Sigmoid colon (tissue), 7 donors: ENCODE measurements at regions of chr7 and their contacts with region 1.

Region 1: GRCh38 chr7:107168233-107169119 is at the start of gene HBP1:
- DNase-seq: peak; percentile 100
- H3K4me3 ChIP-seq: peak within 1 kb of the TSS; percentile 89 to 99 (median 95)
- H3K27ac ChIP-seq: peak within 1 kb of the TSS; percentile 94 to 100 (median 96)
- H3K4me1 ChIP-seq: peaks cover 0 to 40% (median 28%) of the 10 kb centered on the region in 4 donors
- H3K27me3 ChIP-seq: no peaks in the 10 kb centered on the region
- CTCF ChIP-seq: no peak
- EP300 ChIP-seq: no peak
- POLR2A ChIP-seq: peak; percentile 49 to 64
- total RNA-seq, gene HBP1: 104 to 172 (median 119) TPM

Region 2: DNA sequence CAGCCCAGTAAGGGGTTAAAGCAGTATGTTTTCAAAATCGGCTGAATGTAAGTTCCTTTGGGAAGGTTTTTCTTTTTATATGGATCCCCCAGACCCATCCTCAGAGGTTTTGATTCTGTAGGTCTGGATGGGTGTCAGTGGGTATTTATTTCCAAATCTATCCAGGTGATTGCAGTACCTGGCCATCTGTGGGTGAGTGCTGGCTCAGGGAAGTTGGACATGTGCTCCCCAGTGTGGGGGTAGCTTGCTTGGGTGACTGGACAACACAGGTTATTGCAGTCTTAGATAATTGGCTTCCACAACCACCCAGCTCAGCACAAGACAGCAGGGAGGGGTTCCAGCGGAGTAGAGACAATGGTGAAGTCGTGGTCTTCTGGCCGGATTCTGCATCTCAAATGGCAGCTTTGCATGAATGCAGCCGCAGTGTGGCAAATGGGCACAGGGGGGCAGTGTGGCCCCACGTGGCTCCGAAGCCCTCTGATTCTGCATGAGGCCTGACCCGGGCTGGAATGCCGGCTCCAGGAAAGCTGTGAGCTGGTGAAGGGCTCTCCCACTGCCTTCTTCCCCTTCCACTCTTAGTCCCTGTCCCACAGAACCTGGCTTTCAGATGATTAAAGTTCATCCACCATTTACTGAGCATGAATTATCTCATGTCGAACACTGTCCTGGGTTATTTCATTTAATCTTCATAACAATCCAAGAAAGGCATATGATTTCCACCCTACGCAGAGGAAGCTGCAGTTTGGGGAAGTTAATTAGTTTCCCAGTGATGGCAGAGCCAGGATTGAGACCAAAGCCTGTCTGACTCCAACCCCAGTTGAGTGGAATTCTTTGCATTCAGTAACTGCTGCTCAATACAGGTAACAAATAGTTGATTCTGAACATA is 991.8 kb before region 1 on chr7:
- intact Hi-C with region 1: loop called (anchors 10 kb)
- DNase-seq: peak; percentile 90
- H3K4me3 ChIP-seq: no peak overlapping the region
- H3K27ac ChIP-seq: no peak overlapping the region
- H3K4me1 ChIP-seq: peaks cover 0 to 9% (median 5%) of the 10 kb centered on the region in 4 donors
- H3K27me3 ChIP-seq: no peaks in the 10 kb centered on the region
- CTCF ChIP-seq: peak; percentile 90 to 95 (median 92)
- EP300 ChIP-seq: no peak
- POLR2A ChIP-seq: no peak

Region 3: DNA sequence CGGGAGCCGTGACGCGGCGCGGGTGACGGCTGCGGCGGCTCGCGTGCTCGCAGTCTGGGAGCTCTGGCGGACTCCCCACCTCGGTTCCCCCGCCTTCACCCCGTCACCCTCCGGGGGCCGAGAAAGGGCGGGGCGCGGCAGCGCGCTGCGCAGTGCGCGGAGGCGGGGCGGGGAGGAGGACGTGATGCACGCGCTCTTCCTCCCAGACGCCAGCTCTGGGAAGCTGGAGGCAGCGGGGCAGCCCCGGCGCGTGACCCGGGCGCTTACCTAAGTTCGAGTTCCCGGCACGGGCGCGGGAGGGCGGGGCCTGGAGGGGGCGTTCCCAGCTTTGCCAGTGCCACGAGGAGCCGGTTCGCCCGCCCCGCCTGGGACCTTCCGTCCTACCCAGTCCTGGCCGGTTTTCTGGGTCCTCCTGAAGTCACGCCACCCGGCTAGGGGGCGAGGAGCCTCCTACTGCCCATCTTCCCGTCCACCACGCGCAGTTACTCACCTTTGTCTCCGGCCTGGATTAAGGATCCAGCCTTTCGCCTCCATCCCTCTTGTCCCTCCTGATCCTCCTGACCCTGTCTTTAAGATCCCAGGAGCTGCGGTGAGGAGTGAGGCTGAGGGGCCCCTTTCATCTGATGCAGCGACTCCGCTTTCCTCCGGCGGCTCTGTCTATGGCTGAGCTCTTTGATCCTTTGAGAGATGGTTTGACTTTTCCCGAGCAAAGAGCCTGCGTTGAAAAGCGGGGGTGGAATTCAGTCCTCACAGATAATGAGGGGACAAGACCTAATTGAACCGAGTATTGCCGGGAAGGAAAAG is 883.2 kb before region 1 on chr7:
- intact Hi-C with region 1: loop called (anchors 5 kb)
- DNase-seq: peak; percentile 99
- H3K4me3 ChIP-seq: peak overlapping the region; percentile 82 to 87 (median 86)
- H3K27ac ChIP-seq: peak overlapping the region; percentile 98 to 99 (median 98)
- H3K4me1 ChIP-seq: peaks cover 0 to 31% (median 15%) of the 10 kb centered on the region in 4 donors
- H3K27me3 ChIP-seq: no peaks in the 10 kb centered on the region
- CTCF ChIP-seq: no peak
- EP300 ChIP-seq: peak; percentile 74 to 98 (median 82)
- POLR2A ChIP-seq: peak in 1 of 2 donors; percentile 56

Region 4: DNA sequence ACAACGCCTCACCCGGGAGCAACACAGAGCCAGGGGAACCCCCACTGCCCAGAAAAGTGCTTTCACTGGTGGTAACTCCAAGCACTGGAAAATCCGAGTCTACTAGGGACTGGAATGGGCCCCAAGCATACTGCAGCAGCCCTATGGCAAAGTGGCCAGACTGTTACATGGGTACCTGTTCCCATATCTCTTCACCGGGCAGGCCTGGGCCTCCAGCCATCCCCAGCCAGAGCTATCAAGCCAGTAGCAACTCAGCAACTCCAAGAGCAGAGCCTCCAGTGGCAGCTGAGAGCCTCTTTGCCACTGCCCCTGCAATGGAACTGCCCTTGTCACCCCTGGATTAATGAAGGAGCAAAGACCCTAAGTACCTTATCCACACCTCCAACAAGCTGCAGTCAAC is 73.8 kb after region 1 on chr7:
- intact Hi-C with region 1: no loop called
- DNase-seq: no peak
- H3K4me3 ChIP-seq: no peak overlapping the region
- H3K27ac ChIP-seq: no peak overlapping the region
- H3K4me1 ChIP-seq: no peaks in the 10 kb centered on the region
- H3K27me3 ChIP-seq: no peaks in the 10 kb centered on the region
- CTCF ChIP-seq: no peak
- EP300 ChIP-seq: no peak
- POLR2A ChIP-seq: no peak

Region 5: GRCh38 chr7:107262857-107263256 is 94.4 kb after region 1 on chr7:
- intact Hi-C with region 1: no loop called
- DNase-seq: no peak
- H3K4me3 ChIP-seq: no peak overlapping the region
- H3K27ac ChIP-seq: no peak overlapping the region
- H3K4me1 ChIP-seq: no peaks in the 10 kb centered on the region
- H3K27me3 ChIP-seq: no peaks in the 10 kb centered on the region
- CTCF ChIP-seq: no peak
- EP300 ChIP-seq: no peak
- POLR2A ChIP-seq: no peak

Region 6: GRCh38 chr7:107563775-107564552 is 395.5 kb after region 1 on chr7 and contains the starts of genes COG5 and DUS4L:
- intact Hi-C with region 1: loop called (anchors 10 kb)
- DNase-seq: peak; percentile 89
- H3K4me3 ChIP-seq: peak within 1 kb of the TSS; percentile 85 to 98 (median 90)
- H3K27ac ChIP-seq: peak within 1 kb of the TSS; percentile 92 to 96 (median 93)
- H3K4me1 ChIP-seq: peaks cover 0 to 49% (median 30%) of the 10 kb centered on the region in 4 donors
- H3K27me3 ChIP-seq: no peaks in the 10 kb centered on the region
- CTCF ChIP-seq: no peak
- EP300 ChIP-seq: peak in 1 of 4 donors; percentile 9
- POLR2A ChIP-seq: peak in 1 of 2 donors; percentile 58
- total RNA-seq, gene COG5: 26.8 to 73.4 (median 30.2) TPM
- total RNA-seq, gene DUS4L: 5.4 to 10.3 (median 8.3) TPM

Region 7: DNA sequence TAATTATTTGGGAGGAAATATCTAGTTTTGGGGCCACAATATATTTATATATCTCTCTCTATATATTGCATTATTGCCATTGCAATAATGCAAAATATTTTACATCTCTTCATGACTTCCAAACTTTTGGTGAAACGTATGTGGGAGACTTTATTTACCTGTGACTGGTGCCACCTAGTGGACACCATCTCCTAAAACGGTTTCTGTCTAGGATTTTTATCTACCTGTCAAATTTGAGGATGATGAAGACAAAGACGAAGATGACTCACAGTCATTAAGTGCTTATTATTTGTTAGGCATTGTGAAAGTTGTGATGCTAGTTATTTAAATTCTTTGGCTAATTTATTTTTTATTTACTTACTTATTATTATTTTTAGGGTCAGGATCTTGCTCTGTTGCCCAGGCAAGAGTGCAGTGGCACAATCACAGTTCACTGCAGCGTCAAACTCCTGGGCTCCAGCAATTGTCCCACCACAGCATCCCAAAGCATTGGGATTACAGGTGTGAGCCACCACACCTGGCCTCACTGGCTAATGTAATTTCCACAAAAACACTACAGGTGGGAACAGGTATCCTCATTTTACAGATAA is 556.8 kb after region 1 on chr7:
- intact Hi-C with region 1: loop called (anchors 10 kb)
- DNase-seq: no peak
- H3K4me3 ChIP-seq: no peak overlapping the region
- H3K27ac ChIP-seq: no peak overlapping the region
- H3K4me1 ChIP-seq: no peaks in the 10 kb centered on the region
- H3K27me3 ChIP-seq: no peaks in the 10 kb centered on the region
- CTCF ChIP-seq: peak; percentile 44 to 69 (median 50)
- EP300 ChIP-seq: no peak
- POLR2A ChIP-seq: no peak

Region 8: GRCh38 chr7:107743567-107744344 is 575.3 kb after region 1 on chr7 and contains the start of gene CBLL1:
- intact Hi-C with region 1: loop called (anchors 5 kb)
- DNase-seq: peak; percentile 98
- H3K4me3 ChIP-seq: peak within 1 kb of the TSS; percentile 72 to 91 (median 82)
- H3K27ac ChIP-seq: peak within 1 kb of the TSS; percentile 84 to 97 (median 92)
- H3K4me1 ChIP-seq: peaks cover 0 to 49% (median 40%) of the 10 kb centered on the region in 4 donors
- H3K27me3 ChIP-seq: no peaks in the 10 kb centered on the region
- CTCF ChIP-seq: peak; percentile 52 to 86 (median 74)
- EP300 ChIP-seq: no peak
- POLR2A ChIP-seq: peak; percentile 39 to 86
- total RNA-seq, gene CBLL1: 25.2 to 47.4 (median 38.9) TPM

Region 9: GRCh38 chr7:107890962-107891635 is 722.6 kb after region 1 on chr7 and contains the start of gene DLD:
- intact Hi-C with region 1: loop called (anchors 10 kb)
- DNase-seq: peak; percentile 98
- H3K4me3 ChIP-seq: peak within 1 kb of the TSS; percentile 73 to 93 (median 78)
- H3K27ac ChIP-seq: peak within 1 kb of the TSS; percentile 90 to 98 (median 95)
- H3K4me1 ChIP-seq: peaks cover 0 to 52% (median 41%) of the 10 kb centered on the region in 4 donors
- H3K27me3 ChIP-seq: no peaks in the 10 kb centered on the region
- CTCF ChIP-seq: no peak
- EP300 ChIP-seq: peak in 2 of 4 donors; percentile 34 to 63
- POLR2A ChIP-seq: peak; percentile 96
- total RNA-seq, gene DLD: 97.2 to 446 (median 124) TPM